Posterior vena cava (tissue), 2 donors: ENCODE measurements at regions of chr3 and their contacts with region 1.

Region 1: GRCh38 chr3:135752846-135753245 is 212.7 kb upstream of the PPP2R3A start:
- DNase-seq: no peak

Region 2: DNA sequence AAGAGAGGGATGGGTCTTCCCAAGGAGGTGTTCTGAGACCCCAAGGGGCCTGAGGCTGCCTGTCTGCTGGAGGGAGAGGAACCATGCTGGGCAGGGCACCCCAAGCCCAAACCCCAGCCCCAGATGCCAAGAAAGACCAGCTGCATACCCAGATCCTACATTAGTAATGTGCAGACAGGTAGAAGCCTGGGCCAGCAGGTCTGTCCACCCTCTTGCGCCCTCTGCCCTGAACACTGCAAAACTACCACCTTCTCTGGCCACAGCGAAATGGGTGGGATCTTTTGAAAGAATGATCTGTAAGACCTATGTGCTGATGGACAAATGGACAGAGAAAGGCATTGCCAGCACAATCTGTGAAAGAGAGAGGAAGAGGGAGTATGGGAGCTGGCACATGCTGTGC is 674.6 kb before region 1 on chr3:
- intact Hi-C with region 1: loop called in 1 of 2 experiments (anchors 10 kb)
- DNase-seq: no peak

Region 3: DNA sequence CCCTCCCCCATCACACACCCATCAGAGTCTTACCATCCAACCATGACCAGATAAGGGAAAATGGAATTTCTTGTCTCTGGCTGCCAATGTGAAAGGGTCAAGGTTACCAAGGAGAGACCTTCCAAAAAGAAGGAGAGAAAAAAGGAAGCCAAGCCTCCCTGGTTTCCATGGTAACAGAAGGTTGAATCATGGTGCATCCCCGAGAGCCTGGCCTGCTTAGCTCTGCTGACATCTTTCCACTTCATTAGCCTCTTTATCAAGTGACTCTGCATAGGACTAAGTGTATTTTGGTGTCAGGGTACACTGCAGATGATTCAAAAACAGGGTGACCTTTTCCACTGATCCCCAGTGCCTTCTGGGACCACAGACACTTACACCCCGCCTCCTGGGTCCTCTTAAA is 13.1 kb before region 1 on chr3:
- intact Hi-C with region 1: no loop called
- DNase-seq: no peak